ENCODE measurements at regions of chr20 and their contacts with region 1.

Region 1: DNA sequence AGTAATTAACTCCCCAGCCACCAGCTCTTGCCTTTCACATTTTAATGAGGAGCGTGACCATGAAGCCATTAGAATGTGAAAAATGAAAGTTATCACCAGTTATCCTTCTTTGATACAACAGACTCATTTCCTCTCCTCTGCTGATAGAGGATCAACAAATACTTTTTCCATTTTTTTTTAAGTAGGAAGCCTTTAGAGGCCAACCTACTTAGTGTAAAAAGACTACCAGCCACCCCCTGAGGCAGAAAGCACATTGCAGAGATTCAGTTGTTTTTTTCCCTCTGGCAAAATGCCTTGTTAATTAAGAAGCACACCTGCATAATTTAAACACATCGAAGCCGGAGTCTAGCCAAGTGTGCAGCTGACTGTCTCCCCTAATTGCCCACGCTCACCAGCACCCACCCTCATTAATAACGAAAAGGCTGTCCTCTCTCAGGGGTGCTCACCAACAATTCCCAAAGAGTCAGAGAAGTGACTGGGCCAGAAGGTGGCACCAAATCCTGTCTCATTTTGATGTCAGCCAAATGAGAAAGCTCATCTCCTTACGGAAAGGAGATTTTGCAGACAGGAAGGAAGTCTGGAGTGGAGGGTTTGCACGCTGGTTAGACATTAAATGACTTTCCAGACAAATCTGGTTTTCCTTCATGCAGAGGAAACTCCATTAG is 60.9 kb upstream of the MC3R start:
- DNase-seq: no peak
- ATAC-seq: no peak
- H3K4me3 ChIP-seq: no peak overlapping the region
- H3K27ac ChIP-seq: no peak overlapping the region
- H3K4me1 ChIP-seq: no peaks in the 10 kb centered on the region
- H3K27me3 ChIP-seq: peaks cover 0 to 2% of the 10 kb centered on the region in 2 donors

Region 2: GRCh38 chr20:55415567-55416142 is 772.0 kb before region 1 on chr20:
- intact Hi-C with region 1: loop called in 1 of 2 experiments (anchors 10 kb)
- DNase-seq: no peak
- ATAC-seq: peak; percentile 15
- H3K4me3 ChIP-seq: no peak overlapping the region
- H3K27ac ChIP-seq: no peak overlapping the region
- H3K4me1 ChIP-seq: no peaks in the 10 kb centered on the region
- H3K27me3 ChIP-seq: no peaks in the 10 kb centered on the region